ENCODE measurements at regions of chr12 and their contacts with region 1.

Region 1: DNA sequence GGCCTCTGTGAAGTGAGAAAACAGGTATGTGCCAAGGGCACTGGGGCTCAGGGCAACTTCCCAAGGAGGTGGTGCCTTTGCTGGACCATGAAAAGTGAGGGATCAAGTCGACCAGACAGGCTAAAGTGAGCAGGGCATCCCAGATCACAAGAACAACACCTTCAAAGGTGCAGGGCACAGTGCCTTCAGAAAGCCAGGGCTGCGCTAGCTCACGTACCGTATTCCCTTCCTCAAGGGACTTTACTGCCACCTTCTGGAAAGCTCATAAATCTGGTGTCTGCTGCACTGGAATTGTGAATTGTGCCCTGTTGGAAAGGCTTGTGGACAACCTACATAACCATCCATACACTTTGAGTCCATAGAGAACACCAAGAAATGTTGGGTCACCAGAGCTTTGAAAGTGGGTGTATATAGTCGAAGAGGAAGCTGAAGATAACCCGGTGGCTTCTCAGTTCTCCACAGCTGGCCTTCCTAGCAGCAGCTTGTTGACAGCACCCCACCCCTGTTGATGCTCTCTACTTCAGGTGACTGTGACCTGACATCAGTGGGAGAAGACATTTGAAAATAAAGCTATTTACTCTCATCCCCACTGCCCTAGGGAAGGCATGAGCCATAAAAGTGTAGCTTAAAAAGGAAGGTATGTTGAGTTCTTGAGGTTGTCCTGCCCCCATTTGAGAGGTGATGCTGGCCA is 24.5 kb downstream of the FIGNL2 start:
- DNase-seq: peak; percentile 66
- H3K4me3 ChIP-seq: no peak overlapping the region
- H3K27ac ChIP-seq: no peak overlapping the region
- H3K4me1 ChIP-seq: peaks cover 8 to 23% of the 10 kb centered on the region in 2 experiments; a peak in 2 of 4 replicates
- H3K27me3 ChIP-seq: no peaks in the 10 kb centered on the region
- CTCF ChIP-seq: peak; percentile 70
- EP300 ChIP-seq: no peak
- RAD21 ChIP-seq: peak; percentile 78

Region 2: DNA sequence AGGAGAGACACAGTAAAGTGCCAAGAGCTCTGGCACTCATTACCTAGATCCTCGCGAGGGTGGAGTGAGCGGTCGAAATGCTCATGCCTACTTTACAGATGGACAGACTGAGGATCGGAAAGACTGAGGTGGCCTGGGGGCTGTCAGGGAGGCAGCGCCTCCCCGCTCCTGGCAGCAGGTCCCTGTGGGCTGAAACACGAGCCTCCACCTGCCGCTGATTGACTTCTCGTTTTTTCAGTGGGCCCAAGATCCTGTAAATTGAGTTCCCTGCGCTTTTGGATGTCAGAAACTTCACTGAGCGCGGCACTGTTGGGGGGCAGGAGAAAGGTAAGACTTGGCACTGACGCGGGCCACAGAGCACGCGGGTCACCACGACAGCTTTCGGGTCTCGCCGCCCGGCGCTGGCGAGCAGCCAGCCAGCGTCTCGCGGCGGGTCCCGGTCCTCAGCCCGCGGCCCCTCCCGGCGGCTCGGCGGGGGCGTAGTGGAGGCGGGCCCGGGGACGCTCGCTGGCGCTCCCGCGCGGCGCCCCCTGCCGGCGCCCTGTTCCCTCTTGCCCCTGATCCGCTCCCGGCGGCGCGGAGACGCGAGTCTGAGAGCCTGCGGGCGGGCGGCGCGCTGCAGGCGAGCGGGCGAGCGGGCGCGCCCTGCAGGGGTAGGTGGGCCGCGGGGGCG is 233.5 kb before region 1 on chr12:
- CTCF ChIA-PET with region 1: interaction called, 10 read pairs
- POLR2A ChIA-PET with region 1: interaction called, 3 read pairs
- DNase-seq: peak; percentile 96
- H3K4me3 ChIP-seq: peak overlapping the region; percentile 63 to 72
- H3K27ac ChIP-seq: peak overlapping the region; percentile 31 to 50; a peak in 2 of 4 replicates
- H3K4me1 ChIP-seq: peaks cover 0 to 16% of the 10 kb centered on the region in 2 experiments; a peak in 2 of 4 replicates
- H3K27me3 ChIP-seq: no peaks in the 10 kb centered on the region
- CTCF ChIP-seq: peak; percentile 44
- EP300 ChIP-seq: no peak
- RAD21 ChIP-seq: peak; percentile 41; the same call in 1 of the 2 replicates

Region 3: DNA sequence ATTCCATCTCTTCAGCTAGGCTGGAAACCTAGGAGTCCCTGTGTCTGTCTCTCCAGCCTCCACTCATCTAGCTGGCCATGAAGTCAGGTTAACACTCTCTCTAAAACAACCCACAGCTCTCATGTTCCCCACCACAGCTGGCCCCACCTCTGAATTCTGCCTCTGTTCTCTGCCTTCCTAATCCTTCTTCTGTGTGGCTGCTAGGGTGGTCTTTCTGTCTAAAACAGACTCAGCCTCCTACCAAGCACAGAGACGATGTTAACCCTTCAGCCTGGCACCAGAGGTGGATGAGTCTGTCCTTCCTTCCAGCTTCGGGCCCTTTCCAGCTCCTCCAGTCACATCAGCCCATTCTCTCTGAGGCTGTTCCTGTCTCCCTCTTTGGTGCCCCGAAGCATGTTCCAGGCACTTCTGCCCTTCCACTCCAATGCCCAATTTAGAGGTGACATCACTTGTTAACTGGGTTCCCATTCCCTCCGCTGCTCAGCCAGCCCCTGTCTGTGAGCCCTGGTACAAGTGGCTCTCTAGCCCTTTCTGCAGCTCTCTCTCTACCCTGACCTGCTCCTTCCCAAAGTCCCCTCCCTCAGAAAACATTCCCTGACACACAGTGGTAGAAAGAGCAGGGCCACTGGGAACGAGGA is 15.4 kb after region 1 on chr12:
- CTCF ChIA-PET with region 1: interaction called, 25 read pairs
- POLR2A ChIA-PET with region 1: interaction called, 5 read pairs
- DNase-seq: no peak
- H3K4me3 ChIP-seq: no peak overlapping the region
- H3K27ac ChIP-seq: no peak overlapping the region
- H3K4me1 ChIP-seq: peaks cover 0 to 49% of the 10 kb centered on the region in 2 experiments; a peak in 1 of 4 replicates
- H3K27me3 ChIP-seq: peaks cover 9% of the 10 kb centered on the region; the same call in 1 of the 2 replicates
- CTCF ChIP-seq: no peak
- EP300 ChIP-seq: no peak
- RAD21 ChIP-seq: no peak

Region 4: DNA sequence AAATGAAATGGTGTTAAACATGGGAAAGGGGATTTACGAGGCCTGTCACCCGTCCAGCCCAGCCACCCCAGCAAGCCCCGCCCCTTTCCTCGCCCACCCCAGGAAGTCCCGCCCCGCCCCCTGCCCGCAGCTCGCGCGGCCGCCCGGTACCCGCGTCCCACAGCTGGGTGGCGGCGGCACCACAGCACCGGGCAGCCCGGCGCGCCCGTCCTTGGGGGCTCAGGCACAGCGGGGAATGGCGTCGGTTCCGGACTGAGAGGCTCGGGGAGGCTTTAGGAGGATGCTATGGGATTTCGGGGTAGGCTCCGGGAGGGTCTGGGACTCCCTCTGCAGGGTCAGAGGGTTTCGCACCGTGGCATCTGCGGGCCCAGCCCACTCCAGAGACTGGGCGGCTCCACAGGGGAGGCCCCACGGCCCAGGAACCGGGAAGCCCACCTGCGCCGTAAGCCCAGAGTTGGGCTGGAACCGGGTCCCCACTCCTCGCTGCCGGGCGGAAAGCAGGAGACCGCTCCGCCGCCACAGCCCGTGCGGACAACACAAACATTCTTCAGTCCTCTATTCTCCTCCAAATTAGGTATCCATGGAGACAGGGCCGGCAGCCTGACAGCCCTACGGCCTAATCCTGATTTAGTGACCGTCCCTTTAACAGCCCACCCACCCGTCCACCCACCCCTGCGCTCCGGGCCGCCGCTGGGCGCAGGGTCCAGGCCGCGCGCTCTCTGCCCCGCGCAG is 23.1 kb after region 1 on chr12:
- CTCF ChIA-PET with region 1: interaction called, 16 read pairs
- POLR2A ChIA-PET with region 1: interaction called, 4 read pairs
- DNase-seq: peak; percentile 94
- H3K4me3 ChIP-seq: peak overlapping the region; percentile 61 to 63
- H3K27ac ChIP-seq: peak overlapping the region in 1 of 2 experiments; percentile 90; a peak in 2 of 4 replicates
- H3K4me1 ChIP-seq: peaks cover 0 to 42% of the 10 kb centered on the region in 2 experiments; a peak in 2 of 4 replicates
- H3K27me3 ChIP-seq: peaks cover 12% of the 10 kb centered on the region; the same call in 1 of the 2 replicates
- CTCF ChIP-seq: no peak
- EP300 ChIP-seq: no peak
- RAD21 ChIP-seq: no peak